ENCODE measurements at regions of chr9 and their contacts with region 1.

Region 1: DNA sequence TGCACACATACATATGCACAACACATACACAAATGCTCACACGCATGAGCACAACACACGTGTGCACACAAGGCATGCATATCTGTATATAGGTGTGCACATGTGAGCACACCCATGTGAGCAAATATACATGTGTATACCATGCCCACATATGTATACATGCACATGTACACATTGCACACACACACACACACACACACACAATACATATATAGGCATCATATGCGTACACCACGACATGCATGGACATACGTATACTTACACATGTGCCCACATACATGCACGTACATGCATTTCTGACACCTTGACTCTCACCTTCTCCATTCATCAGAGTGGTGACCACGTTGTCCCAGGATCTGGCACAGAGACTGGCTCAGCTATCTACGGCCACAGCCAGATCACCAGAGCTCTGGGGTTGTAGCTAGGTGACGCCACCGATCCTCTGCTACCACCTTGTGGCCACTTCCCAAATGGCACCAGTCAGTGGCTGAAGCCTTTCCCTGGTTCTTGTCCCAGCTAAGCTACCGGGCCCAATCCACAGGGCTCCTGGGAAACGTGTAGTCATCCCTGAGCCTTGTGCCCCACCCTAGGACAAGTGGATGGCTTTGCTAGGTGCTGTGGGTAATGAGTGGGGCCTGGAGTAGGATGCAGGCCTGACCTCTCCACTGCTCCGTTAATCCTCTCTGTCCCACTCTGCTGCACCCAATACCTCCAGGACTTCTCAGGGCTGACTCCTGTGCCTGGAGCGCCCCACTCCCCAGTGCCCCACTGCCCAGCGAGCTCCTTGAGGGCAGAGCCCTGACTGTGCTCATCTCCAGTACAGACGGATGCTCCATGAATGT is 194.4 kb downstream of the RGS3 start:
- DNase-seq: peak; percentile 79
- H3K4me3 ChIP-seq: no peak overlapping the region
- H3K27ac ChIP-seq: no peak overlapping the region
- H3K4me1 ChIP-seq: no peaks in the 10 kb centered on the region
- CTCF ChIP-seq: peak; percentile 92

Region 2: GRCh38 chr9:113275157-113276131 is 382.5 kb before region 1 on chr9 and contains the starts of genes CDC26 and PRPF4:
- CTCF ChIA-PET with region 1: no interaction called
- POLR2A ChIA-PET with region 1: no interaction called
- intact Hi-C with region 1: loop called (anchors 1 kb)
- DNase-seq: peak; percentile 97
- H3K4me3 ChIP-seq: peak within 1 kb of the TSS; percentile 84
- H3K27ac ChIP-seq: peak within 1 kb of the TSS; percentile 68
- H3K4me1 ChIP-seq: peaks cover 29% of the 10 kb centered on the region
- CTCF ChIP-seq: no peak
- total RNA-seq, gene CDC26: 29.9 and 42.5 TPM in 2 replicates
- total RNA-seq, gene PRPF4: 27.4 and 27.8 TPM in 2 replicates

Region 3: DNA sequence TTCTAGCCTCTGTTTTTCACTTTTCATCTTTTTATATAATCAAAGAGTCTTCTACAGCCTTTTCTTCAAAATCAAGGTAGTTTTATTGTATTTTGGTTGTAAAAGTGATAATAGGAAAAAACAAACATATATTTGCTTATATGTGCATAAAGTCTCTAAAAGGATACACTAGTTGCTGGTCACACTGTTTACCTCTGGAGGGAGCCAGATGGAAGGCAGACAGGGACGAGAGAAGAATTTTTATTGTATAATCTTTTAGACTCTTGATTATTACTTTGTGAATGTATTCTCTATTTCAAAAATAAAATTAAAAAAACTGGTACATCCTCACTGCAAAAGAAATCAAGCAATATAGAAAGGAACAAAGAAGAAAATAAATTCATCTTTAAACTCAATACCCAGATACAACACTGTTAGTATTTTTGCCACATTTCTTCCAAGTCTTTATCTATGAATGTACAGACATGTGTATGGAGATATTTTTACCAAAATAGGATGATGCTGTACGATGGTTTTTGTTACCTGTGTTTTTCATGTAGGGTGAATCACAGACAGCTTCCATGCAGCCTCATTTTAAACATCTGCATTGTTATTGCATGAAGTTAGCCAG is 348.6 kb before region 1 on chr9:
- CTCF ChIA-PET with region 1: interaction called, 3 read pairs
- POLR2A ChIA-PET with region 1: no interaction called
- intact Hi-C with region 1: loop called (anchors 2 kb)
- DNase-seq: peak; percentile 44
- H3K4me3 ChIP-seq: no peak overlapping the region
- H3K27ac ChIP-seq: no peak overlapping the region
- H3K4me1 ChIP-seq: no peaks in the 10 kb centered on the region
- CTCF ChIP-seq: peak; percentile 95

Region 4: DNA sequence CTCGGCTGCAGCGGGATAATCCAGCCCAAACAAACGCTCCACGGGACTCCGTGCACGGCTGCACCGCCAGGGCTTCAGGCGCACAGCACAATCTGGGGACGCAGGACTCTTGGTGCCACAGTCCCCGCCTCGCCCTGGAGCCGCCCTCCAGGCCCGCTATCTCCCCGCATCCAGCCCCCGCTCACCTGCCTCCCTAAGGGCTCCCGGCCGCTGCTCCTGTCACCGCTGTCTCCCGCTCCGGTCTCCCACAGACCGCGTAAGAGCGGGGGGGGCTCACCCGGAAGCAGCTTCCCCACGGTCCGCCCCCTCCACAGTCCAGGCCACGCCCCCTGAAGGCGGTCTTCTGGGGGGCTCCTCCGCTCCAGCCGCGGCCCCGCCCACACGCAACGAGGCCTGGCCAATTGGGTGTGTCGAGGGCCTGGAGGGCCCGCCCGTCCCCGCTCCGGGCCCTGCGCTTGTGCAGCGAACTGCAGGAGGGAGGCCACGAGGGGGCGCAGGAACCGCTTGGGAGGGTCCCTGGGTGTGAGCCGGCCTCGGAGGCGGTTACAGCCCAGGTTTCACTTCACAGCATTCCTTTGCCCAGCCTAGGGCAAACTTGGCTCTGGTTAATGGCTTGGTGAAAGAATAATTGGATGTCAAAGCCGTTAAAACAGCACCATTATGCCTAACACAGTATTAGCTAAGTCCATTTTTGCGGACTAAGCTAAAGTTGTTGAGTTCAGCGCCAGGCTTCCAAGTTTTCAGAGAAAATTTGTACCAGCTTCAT is 256.7 kb before region 1 on chr9 and contains the start of gene ALAD:
- CTCF ChIA-PET with region 1: no interaction called
- POLR2A ChIA-PET with region 1: no interaction called
- intact Hi-C with region 1: loop called (anchors 1 kb)
- DNase-seq: peak; percentile 99
- H3K4me3 ChIP-seq: peak within 1 kb of the TSS; percentile 92
- H3K27ac ChIP-seq: peak within 1 kb of the TSS; percentile 12
- H3K4me1 ChIP-seq: peaks cover 12% of the 10 kb centered on the region
- CTCF ChIP-seq: peak; percentile 91
- total RNA-seq, gene ALAD: 14.3 and 19.8 TPM in 2 replicates

Region 5: DNA sequence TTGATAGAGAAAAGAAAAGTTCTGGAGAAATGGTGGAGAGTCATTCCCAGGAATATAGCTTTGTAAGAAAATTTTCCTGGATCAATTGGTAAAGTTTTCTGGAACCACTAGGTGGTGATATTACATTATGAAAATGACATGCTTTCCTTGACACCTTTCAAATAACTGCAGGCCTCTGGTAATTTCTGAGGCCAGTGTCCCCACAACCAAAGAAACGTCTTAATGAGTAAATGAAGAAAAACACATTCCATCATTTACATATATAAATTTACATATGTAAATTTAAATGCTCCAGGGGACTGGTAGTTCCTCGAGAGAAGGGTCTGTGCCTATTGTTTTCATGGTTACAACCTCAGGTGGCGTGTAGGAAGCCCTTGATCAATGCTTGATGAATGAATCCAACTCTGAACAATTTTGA is 211.6 kb before region 1 on chr9:
- CTCF ChIA-PET with region 1: interaction called, 7 read pairs
- POLR2A ChIA-PET with region 1: interaction called, 5 read pairs
- intact Hi-C with region 1: loop called (anchors 2 kb)
- DNase-seq: peak; percentile 68
- H3K4me3 ChIP-seq: no peak overlapping the region
- H3K27ac ChIP-seq: no peak overlapping the region
- H3K4me1 ChIP-seq: peaks cover 5% of the 10 kb centered on the region
- CTCF ChIP-seq: peak; percentile 98

Region 6: GRCh38 chr9:113523421-113524236 is 134.3 kb before region 1 on chr9:
- CTCF ChIA-PET with region 1: no interaction called
- POLR2A ChIA-PET with region 1: interaction called, 3 read pairs
- intact Hi-C with region 1: loop called (anchors 5 kb)
- DNase-seq: peak; percentile 73
- H3K4me3 ChIP-seq: peak overlapping the region; percentile 57
- H3K27ac ChIP-seq: peak overlapping the region; percentile 77
- H3K4me1 ChIP-seq: peaks cover 65% of the 10 kb centered on the region
- CTCF ChIP-seq: no peak

Region 7: DNA sequence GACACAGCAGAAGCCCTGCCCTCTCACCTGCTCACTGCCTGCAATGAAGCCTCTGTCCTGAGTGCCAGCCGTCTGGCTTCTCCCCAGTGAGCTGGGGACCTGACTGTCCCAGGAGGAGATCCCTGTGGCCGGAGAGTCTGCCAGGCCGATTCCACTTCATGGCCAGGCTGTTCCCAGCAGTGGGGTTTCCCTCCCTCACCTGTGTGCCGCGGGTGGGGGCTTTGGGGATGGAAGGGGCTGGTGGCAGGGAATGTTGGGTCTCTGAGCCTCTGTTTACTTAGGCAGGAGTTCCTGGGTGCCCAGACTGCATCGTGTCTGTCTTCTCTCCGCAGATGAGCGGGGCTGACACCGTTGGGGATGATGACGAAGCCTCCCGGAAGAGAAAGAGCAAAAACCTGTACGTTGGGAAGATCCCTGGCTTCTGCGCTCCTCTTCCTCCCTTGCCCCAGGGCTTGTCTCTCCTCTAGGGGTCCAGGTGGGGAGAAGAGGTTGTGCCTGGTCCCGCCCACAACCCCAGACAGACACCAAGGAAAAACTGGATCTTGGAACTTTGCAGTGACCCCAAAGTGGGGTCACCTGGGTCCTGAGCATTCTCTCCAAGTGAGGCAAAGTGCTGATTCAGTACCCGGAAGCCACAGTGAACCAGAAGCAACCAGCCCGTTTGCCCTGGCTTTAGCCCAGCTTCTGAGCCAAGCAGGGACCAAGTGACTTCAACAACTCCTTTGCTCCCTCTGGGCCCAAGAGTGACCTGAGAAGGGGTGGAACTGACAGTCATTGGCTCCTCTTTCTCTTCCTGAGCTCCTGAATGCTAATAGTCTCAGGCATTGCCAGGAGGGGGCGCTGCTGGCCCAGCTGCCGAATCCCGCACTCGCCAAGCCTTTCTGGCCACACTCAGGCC is 66.7 kb before region 1 on chr9:
- CTCF ChIA-PET with region 1: interaction called, 16 read pairs
- POLR2A ChIA-PET with region 1: interaction called, 4 read pairs
- intact Hi-C with region 1: loop called (anchors 1 kb)
- DNase-seq: peak; percentile 73
- H3K4me3 ChIP-seq: no peak overlapping the region
- H3K27ac ChIP-seq: no peak overlapping the region
- H3K4me1 ChIP-seq: peaks cover 6% of the 10 kb centered on the region
- CTCF ChIP-seq: peak; percentile 98